K562 (cell line): ENCODE measurements at regions of chr16 and their contacts with region 1.

Region 1: DNA sequence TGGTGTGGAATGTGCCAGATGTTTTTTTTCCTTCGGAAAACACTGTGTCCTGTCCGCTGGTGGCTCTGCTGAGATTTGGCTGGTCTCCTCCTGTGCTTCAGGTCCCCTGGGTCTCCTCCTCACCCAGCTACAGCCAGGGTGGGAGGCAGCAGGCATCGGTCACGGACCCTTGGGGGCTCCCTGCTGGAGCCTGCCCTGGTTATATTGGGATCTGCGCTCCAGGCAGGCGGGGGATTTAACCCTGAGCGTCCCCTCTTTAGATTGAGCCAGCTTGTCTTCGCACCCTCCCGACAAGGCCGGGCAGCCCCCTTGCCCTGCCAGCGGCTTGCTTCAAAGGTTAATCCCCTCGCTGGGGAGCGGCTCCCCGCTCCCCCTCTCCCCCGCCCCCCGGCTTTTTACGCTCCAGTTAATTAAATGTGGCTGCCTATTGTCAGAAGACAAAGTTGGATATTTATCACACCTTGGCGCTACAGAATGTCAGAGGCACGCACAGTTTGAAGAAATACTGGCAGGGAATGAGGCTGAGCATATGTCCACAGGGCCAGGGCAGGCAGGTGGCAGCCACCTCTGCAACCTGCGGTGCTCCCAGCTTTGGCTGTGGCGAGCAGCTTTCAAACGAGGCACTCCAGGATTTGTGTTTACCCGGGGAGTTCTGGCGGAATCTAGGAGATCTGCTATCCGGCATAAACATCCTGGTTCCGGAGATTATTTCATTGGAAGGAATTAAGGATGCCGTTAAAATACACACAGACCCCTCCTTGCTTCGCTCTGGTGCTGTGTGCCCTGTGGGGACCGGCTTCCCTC is 38.2 kb upstream of the GSE1 start:
- DNase-seq: no peak
- ATAC-seq: no peak
- H3K4me3 ChIP-seq: peak overlapping the region; percentile 17; the same call in 1 of the 2 replicates
- H3K27ac ChIP-seq: peak overlapping the region; percentile 97
- H3K4me1 ChIP-seq: peaks cover 84 to 89% of the 10 kb centered on the region in 2 experiments
- H3K27me3 ChIP-seq: no peaks in the 10 kb centered on the region; a peak in 1 of 5 replicates
- CTCF ChIP-seq: no peak
- EP300 ChIP-seq: no peak
- POLR2A ChIP-seq: no peak
- RAD21 ChIP-seq: no peak

Region 2: GRCh38 chr16:85541980-85542900 is 32.6 kb before region 1 on chr16:
- CTCF ChIA-PET with region 1: no interaction called
- POLR2A ChIA-PET with region 1: no interaction called
- in situ Hi-C with region 1: no loop called
- intact Hi-C with region 1: no loop called
- DNase-seq: peak; percentile 71 to 78 (median 74)
- ATAC-seq: peak; percentile 79
- H3K4me3 ChIP-seq: no peak overlapping the region
- H3K27ac ChIP-seq: peak overlapping the region; percentile 27; the same call in 2 of the 3 replicates
- H3K4me1 ChIP-seq: peaks cover 42 to 73% of the 10 kb centered on the region in 2 experiments
- H3K27me3 ChIP-seq: no peaks in the 10 kb centered on the region; a peak in 1 of 5 replicates
- CTCF ChIP-seq: no peak
- EP300 ChIP-seq: peak; percentile 20; the same call in 1 of the 2 replicates
- POLR2A ChIP-seq: no peak
- RAD21 ChIP-seq: no peak

Region 3: DNA sequence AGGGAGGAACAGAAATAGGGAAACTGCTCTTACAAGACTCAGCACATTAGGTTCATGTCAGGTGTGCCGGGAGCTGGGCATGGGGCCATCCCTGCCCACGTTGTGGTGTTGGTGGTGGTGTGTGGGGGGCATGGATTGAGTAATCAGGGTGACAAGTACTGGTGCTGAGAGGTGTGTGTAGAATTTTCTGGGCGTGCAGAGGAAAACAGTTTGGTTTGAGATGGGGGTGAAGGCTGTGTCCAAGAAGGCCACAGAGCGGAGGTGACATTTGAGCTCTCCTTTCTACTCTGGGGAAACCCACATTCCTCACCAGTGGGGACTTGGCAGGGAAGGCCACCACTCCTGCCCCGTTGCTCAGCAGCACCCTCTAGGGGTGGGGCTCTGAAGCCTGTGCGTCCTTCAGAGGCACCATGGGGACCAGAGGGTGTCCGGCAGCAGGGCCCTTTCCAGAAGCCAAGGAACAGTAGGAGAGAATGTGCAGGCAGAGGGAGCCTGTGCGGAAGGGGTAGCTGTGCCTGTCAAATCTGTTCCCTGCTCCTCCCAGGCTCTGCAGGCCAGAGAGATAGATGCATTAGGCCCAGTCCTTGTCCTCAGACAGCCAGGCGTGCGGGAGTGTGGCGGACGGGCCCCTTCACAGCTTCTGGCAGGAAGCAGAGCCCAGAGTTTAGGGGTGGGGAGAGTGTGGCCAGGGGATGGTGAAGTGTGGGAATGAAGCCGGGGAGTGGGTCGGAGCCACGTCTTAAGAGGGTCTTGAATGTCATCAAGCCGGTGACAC is 10.4 kb before region 1 on chr16:
- CTCF ChIA-PET with region 1: no interaction called
- POLR2A ChIA-PET with region 1: interaction called, 28 read pairs
- in situ Hi-C with region 1: no loop called
- intact Hi-C with region 1: no loop called
- DNase-seq: peak in 3 of 4 experiments; percentile 58 to 81 (median 74)
- ATAC-seq: peak; percentile 4
- H3K4me3 ChIP-seq: no peak overlapping the region
- H3K27ac ChIP-seq: peak overlapping the region; percentile 97
- H3K4me1 ChIP-seq: peaks cover 90 to 98% of the 10 kb centered on the region in 2 experiments
- H3K27me3 ChIP-seq: no peaks in the 10 kb centered on the region
- CTCF ChIP-seq: peak; percentile 89 to 98 (median 92)
- EP300 ChIP-seq: no peak
- POLR2A ChIP-seq: 0 out of 2 replicates have a peak, but pooled peaks have one; percentile 6
- RAD21 ChIP-seq: peak; percentile 30 to 59; a peak in 3 of 4 replicates